Activated naive CD4-positive, alpha-beta T cell treated with anti-CD3 and anti-CD28 coated beads for 36 hours (primary cell): ENCODE measurements at regions of chr9 and their contacts with region 1.

Region 1: GRCh38 chr9:21395778-21396717 is 10.8 kb upstream of the IFNA2 start:
- DNase-seq: peak; percentile 64
- H3K4me3 Mint-ChIP-seq: peak overlapping the region; percentile 50
- H3K27ac Mint-ChIP-seq: no peak overlapping the region
- H3K4me1 Mint-ChIP-seq: peaks cover 9% of the 10 kb centered on the region
- H3K27me3 Mint-ChIP-seq: peaks cover 39% of the 10 kb centered on the region

Region 2: DNA sequence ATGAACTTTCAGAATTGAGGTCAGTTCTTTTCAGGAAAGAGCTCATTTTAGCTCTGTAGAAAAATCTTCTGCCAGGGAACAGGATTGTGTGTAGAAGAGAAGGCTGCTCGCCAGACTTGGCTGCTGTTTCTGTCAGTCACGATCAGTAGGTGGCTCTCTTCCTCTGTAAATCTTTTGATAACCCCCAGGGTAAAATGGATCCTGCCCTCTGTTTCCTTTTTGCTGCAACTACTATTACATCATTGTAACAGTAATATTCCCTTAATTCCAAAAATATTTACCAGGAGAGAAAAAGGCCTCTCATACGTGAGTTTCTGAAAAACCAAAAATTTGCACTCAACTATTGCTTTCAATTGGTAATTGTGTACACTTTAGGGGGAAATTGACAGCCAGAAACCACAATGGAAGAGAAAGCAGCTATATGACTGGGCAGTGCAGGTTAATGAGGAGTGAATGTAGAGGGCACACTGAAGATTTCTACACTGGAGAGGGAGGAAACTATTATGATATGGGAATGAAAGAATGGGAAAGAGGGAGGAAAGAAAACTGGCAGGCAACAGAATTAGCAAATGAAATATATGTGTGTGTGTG is 241.9 kb before region 1 on chr9:
- CTCF ChIA-PET with region 1: no interaction called
- intact Hi-C with region 1: loop called (anchors 5 kb)
- DNase-seq: no peak
- H3K4me3 Mint-ChIP-seq: no peak overlapping the region
- H3K27ac Mint-ChIP-seq: no peak overlapping the region
- H3K4me1 Mint-ChIP-seq: peaks cover 4% of the 10 kb centered on the region
- H3K27me3 Mint-ChIP-seq: peaks cover 2% of the 10 kb centered on the region

Region 3: DNA sequence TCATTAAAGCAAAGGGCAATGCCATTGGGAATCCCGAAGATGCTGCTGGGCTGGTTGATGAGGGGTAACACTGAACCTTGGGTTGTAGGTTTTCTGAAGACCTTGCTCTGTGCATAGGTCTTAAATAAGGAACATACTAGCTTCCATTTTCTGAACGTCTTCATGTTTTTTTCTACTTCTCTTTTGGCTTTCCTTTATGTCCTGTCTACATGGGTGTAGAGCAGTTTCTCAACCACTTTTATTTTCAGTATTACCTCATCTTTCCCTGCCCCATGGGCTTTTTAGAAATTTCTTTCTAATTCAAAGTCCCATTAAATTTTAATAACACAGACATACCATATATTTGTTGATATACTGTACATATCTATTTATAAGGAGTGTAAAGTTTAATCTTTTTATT is 156.1 kb before region 1 on chr9 and contains the start of gene IFNA14:
- CTCF ChIA-PET with region 1: interaction called, 9 read pairs
- intact Hi-C with region 1: loop called (anchors 5 kb)
- DNase-seq: no peak
- H3K4me3 Mint-ChIP-seq: no peak within 1 kb of the TSS
- H3K27ac Mint-ChIP-seq: no peak within 1 kb of the TSS
- H3K4me1 Mint-ChIP-seq: peaks cover 8% of the 10 kb centered on the region
- H3K27me3 Mint-ChIP-seq: peaks cover 2% of the 10 kb centered on the region
- total RNA-seq, gene IFNA14: not detected

Region 4: GRCh38 chr9:21317956-21318923 is 77.8 kb before region 1 on chr9:
- CTCF ChIA-PET with region 1: interaction called, 19 read pairs
- intact Hi-C with region 1: loop called (anchors 2 kb)
- DNase-seq: peak; percentile 61
- H3K4me3 Mint-ChIP-seq: no peak overlapping the region
- H3K27ac Mint-ChIP-seq: no peak overlapping the region
- H3K4me1 Mint-ChIP-seq: peaks cover 4% of the 10 kb centered on the region
- H3K27me3 Mint-ChIP-seq: no peaks in the 10 kb centered on the region

Region 5: GRCh38 chr9:21334701-21335632 is 61.1 kb before region 1 on chr9 and contains the start of gene KLHL9:
- CTCF ChIA-PET with region 1: interaction called, 37 read pairs
- intact Hi-C with region 1: loop called (anchors 1 kb)
- DNase-seq: peak; percentile 93
- H3K4me3 Mint-ChIP-seq: peak within 1 kb of the TSS; percentile 84
- H3K27ac Mint-ChIP-seq: peak within 1 kb of the TSS; percentile 91
- H3K4me1 Mint-ChIP-seq: peaks cover 48% of the 10 kb centered on the region
- H3K27me3 Mint-ChIP-seq: no peaks in the 10 kb centered on the region
- total RNA-seq, gene KLHL9: 17.5 to 18.3 TPM

Region 6: GRCh38 chr9:21381448-21382339 is 14.4 kb before region 1 on chr9:
- CTCF ChIA-PET with region 1: interaction called, 9 read pairs
- intact Hi-C with region 1: loop called (anchors 2 kb)
- DNase-seq: peak; percentile 17
- H3K4me3 Mint-ChIP-seq: no peak overlapping the region
- H3K27ac Mint-ChIP-seq: no peak overlapping the region
- H3K4me1 Mint-ChIP-seq: peaks cover 14% of the 10 kb centered on the region
- H3K27me3 Mint-ChIP-seq: peaks cover 32% of the 10 kb centered on the region